Heart right ventricle (tissue), 16 donors: ENCODE measurements at regions of chr3 and their contacts with region 1.

Region 1: GRCh38 chr3:14879211-14879874 is 60.6 kb downstream of the FGD5 start:
- DNase-seq: no peak
- ATAC-seq: peak in 7 of 8 donors; percentile 34 to 63 (median 50)
- H3K4me3 ChIP-seq: no peak overlapping the region
- H3K27ac ChIP-seq: peak overlapping the region in 4 of 10 donors; percentile 25 to 81 (median 35)
- H3K4me1 ChIP-seq: peaks cover 15 to 64% (median 46%) of the 10 kb centered on the region in 9 donors
- H3K27me3 ChIP-seq: no peaks in the 10 kb centered on the region
- CTCF ChIP-seq: no peak

Region 2: GRCh38 chr3:14803101-14803980 is 76.0 kb before region 1 on chr3:
- intact Hi-C with region 1: loop called in 1 of 10 experiments (anchors 5 kb)
- DNase-seq: peak in 1 of 2 donors; percentile 51
- ATAC-seq: peak; percentile 42 to 75 (median 55)
- H3K4me3 ChIP-seq: no peak overlapping the region
- H3K27ac ChIP-seq: peak overlapping the region; percentile 52 to 85 (median 73)
- H3K4me1 ChIP-seq: peaks cover 2 to 53% (median 41%) of the 10 kb centered on the region in 9 donors
- H3K27me3 ChIP-seq: peaks cover 0 to 10% (median 5%) of the 10 kb centered on the region in 7 donors
- CTCF ChIP-seq: peak in 1 of 9 donors; percentile 14

Region 3: GRCh38 chr3:14810070-14810784 is 69.1 kb before region 1 on chr3:
- intact Hi-C with region 1: loop called in 1 of 10 experiments (anchors 10 kb)
- DNase-seq: peak; percentile 59 to 69
- ATAC-seq: peak; percentile 62 to 82 (median 72)
- H3K4me3 ChIP-seq: peak overlapping the region; percentile 45 to 84 (median 78)
- H3K27ac ChIP-seq: peak overlapping the region; percentile 82 to 97 (median 94)
- H3K4me1 ChIP-seq: peaks cover 5 to 75% (median 54%) of the 10 kb centered on the region in 9 donors
- H3K27me3 ChIP-seq: peaks cover 4 to 67% (median 31%) of the 10 kb centered on the region in 7 donors
- CTCF ChIP-seq: no peak

Region 4: GRCh38 chr3:14847613-14848541 is 31.5 kb before region 1 on chr3:
- intact Hi-C with region 1: loop called in 1 of 10 experiments (anchors 2 kb)
- DNase-seq: peak; percentile 74 to 84
- ATAC-seq: peak; percentile 73 to 93 (median 86)
- H3K4me3 ChIP-seq: no peak overlapping the region
- H3K27ac ChIP-seq: peak overlapping the region; percentile 20 to 86 (median 68)
- H3K4me1 ChIP-seq: peaks cover 17 to 82% (median 52%) of the 10 kb centered on the region in 9 donors
- H3K27me3 ChIP-seq: peaks cover 0 to 8% (median 0%) of the 10 kb centered on the region in 7 donors
- CTCF ChIP-seq: peak in 1 of 9 donors; percentile 19

Region 5: DNA sequence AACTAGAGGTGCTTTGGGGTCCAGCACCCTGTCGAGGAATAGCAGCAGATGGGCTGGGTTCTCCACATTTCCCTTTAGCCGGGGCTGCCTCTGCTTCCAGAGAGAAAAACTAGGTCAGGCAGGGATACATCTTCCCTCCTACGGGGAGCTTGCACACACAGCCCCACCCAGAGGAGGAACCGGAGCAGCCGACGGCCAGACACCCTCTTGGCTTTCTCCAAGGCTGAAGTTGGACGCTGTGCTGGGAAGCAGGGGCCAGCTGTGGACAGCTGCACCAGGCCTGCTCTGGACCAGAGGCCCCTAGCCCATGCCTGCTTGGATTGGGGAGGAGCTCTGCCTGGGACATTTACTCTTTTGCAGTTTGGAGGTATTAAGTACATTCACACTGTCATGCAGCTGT is 23.4 kb after region 1 on chr3:
- intact Hi-C with region 1: loop called in 1 of 10 experiments (anchors 2 kb)
- DNase-seq: peak; percentile 66 to 70
- ATAC-seq: peak; percentile 86 to 94 (median 92)
- H3K4me3 ChIP-seq: no peak overlapping the region
- H3K27ac ChIP-seq: peak overlapping the region in 3 of 10 donors; percentile 6 to 48 (median 15)
- H3K4me1 ChIP-seq: peaks cover 0 to 30% (median 11%) of the 10 kb centered on the region in 9 donors
- H3K27me3 ChIP-seq: peaks cover 0 to 22% (median 0%) of the 10 kb centered on the region in 7 donors
- CTCF ChIP-seq: peak in 4 of 9 donors; percentile 17 to 40 (median 28)